ENCODE measurements at regions of chr18 and their contacts with region 1.

Region 1: DNA sequence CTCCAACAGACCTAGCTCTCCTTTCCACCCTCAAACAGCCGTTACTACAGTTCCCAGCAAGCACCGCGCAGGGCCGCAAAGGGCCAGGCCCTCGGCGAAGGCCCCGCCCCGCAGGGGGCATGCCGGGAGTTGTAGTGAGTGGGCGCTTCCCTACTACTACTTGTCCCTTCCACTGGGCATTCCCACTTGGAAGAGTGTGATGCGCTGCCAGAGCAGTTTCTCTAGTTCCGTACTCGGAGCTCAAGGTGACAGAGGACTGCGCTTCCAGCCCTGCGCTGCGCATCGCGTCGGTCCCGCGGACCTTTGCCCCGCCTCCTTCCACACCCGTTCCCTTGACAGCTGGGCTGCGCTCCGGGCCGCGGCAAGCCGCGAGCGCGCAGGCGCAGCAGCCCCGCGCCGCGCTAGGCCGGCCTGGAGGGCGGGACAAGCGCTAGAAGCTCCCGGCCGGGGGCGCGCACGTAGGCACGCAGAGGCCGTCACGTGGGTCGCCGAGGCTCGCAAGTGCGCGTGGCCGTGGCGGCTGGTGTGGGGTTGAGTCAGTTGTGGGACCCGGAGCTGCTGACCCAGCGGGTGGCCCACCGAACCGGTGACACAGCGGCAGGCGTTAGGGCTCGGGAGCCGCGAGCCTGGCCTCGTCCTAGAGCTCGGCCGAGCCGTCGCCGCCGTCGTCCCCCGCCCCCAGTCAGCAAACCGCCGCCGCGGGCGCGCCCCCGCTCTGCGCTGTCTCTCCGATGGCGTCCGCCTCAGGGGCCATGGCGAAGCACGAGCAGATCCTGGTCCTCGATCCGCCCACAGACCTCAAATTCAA is at the start of gene VAPA:
- DNase-seq: peak; percentile 95 to 98 (median 96)
- ATAC-seq: peak; percentile 95 to 98 (median 96)
- H3K4me3 ChIP-seq: peak within 1 kb of the TSS; percentile 71 to 98 (median 94)
- H3K27ac ChIP-seq: peak within 1 kb of the TSS; percentile 99 to 100 (median 99)
- H3K4me1 ChIP-seq: peaks cover 0 to 41% (median 36%) of the 10 kb centered on the region in 12 donors
- H3K27me3 ChIP-seq: no peaks in the 10 kb centered on the region
- CTCF ChIP-seq: no peak
- POLR2A ChIP-seq: peak in 1 of 2 donors; percentile 87
- total RNA-seq, gene VAPA: 186 to 289 (median 219) TPM

Region 2: DNA sequence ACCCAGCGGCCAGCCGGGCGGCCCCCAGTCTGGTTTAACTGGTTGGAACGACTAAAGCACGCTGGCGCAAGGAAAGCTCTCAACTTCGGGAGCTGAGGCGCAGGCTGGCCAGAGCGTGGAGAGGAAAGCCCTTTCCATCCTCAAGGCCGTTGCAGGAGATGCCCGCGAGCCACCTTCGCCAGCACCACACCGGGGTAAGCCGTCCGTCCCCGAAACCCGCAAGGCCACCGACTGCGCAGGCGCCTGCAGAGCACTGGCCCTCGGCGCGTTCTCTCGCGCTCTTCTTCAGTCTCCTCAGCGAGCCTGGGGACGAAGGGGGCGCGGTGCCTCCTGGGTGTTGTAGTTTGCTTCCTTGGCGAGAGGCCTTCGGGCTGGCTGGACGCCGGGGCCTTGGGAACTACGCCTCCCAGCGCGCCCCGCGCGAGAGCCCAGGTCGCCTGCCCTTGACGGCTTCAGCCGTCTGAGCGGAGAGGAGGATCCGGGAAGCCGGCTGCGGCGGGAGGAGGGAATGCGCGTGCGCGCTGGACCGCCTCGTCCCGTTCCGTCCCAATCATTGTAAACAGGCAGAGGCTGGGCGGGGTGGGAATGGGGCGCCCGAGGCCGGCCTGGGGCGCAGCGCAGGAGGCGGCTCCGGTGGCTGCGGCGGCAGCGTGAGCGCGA is 438.6 kb before region 1 on chr18 and contains the start of gene RALBP1:
- intact Hi-C with region 1: loop called in 1 of 10 experiments (anchors 5 kb)
- DNase-seq: peak; percentile 99 to 100 (median 100)
- ATAC-seq: peak; percentile 99
- H3K4me3 ChIP-seq: peak within 1 kb of the TSS; percentile 81 to 99 (median 92)
- H3K27ac ChIP-seq: peak within 1 kb of the TSS; percentile 89 to 98 (median 94)
- H3K4me1 ChIP-seq: peaks cover 0 to 30% (median 16%) of the 10 kb centered on the region in 12 donors
- H3K27me3 ChIP-seq: no peaks in the 10 kb centered on the region
- CTCF ChIP-seq: peak in 4 of 12 donors; percentile 35 to 47 (median 43)
- POLR2A ChIP-seq: peak; percentile 51 to 90
- total RNA-seq, gene RALBP1: 36.9 to 91.1 (median 50.3) TPM

Region 3: DNA sequence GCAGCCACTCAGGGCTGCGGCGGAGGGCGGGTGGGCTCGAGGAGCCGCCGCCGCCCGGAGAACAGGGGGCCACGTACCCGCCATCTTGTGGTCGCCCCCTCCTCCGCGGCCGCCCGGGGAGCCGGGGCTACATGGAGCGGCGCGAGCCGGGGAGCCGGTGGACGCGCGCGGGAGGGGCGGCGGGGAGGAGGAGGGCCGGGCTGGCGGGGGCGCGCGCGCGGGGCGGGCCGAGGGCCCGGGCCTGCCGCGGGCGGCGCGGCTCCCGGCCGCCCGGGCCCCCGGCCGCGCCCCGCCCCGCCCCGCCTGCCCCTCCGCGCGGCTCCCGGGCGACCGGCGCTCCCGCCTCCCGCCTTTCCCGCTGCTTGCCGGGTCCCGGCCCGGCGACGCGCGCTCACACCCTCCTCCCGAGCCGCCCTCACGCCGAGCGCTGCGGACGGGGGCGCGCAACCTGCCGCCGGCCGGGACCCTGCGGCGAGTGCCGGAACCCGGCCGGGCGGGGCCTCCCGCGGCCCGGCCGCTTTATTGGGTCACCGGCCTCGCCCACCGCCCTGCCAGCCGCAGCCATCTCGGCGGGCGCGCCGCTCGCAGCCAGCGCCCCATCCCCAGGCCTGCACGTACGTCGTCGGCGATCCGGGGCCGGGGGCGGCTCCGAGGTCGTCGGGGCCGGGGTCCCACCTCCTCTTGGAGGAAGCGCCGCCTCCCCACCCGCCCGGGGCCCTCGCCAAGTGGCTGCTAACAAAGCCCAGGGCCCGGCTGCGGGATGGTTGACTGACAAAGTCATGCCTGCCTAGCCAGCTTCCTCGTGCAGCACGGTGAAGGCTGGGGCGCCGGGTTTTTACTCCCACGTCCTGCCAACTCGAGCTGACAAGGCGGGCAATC is 299.1 kb before region 1 on chr18 and contains the start of gene PPP4R1:
- intact Hi-C with region 1: loop called in 1 of 10 experiments (anchors 10 kb)
- DNase-seq: peak; percentile 83 to 90 (median 88)
- ATAC-seq: peak; percentile 44 to 86 (median 78)
- H3K4me3 ChIP-seq: peak within 1 kb of the TSS; percentile 74 to 99 (median 85)
- H3K27ac ChIP-seq: peak within 1 kb of the TSS; percentile 92 to 99 (median 97)
- H3K4me1 ChIP-seq: peaks cover 0 to 43% (median 25%) of the 10 kb centered on the region in 12 donors
- H3K27me3 ChIP-seq: no peaks in the 10 kb centered on the region
- CTCF ChIP-seq: no peak
- POLR2A ChIP-seq: peak in 1 of 2 donors; percentile 29
- total RNA-seq, gene PPP4R1: 39.1 to 81.3 (median 63.8) TPM

Region 4: GRCh38 chr18:9708057-9708433 is 205.7 kb before region 1 on chr18 and contains the start of gene RAB31:
- intact Hi-C with region 1: loop called in 2 of 10 experiments (anchors 10 kb)
- DNase-seq: peak; percentile 86 to 90 (median 89)
- ATAC-seq: peak; percentile 66 to 96 (median 93)
- H3K4me3 ChIP-seq: peak within 1 kb of the TSS; percentile 60 to 98 (median 73)
- H3K27ac ChIP-seq: peak within 1 kb of the TSS; percentile 84 to 95 (median 88)
- H3K4me1 ChIP-seq: peaks cover 0 to 60% (median 10%) of the 10 kb centered on the region in 12 donors
- H3K27me3 ChIP-seq: no peaks in the 10 kb centered on the region
- CTCF ChIP-seq: peak in 3 of 12 donors; percentile 10 to 19 (median 12)
- POLR2A ChIP-seq: peak in 1 of 2 donors; percentile 68
- total RNA-seq, gene RAB31: 8.6 to 67.7 (median 15.4) TPM

Region 5: GRCh38 chr18:9827641-9828505 is 85.9 kb before region 1 on chr18:
- intact Hi-C with region 1: loop called in 2 of 10 experiments (anchors 10 kb)
- DNase-seq: peak in 2 of 5 donors; percentile 55 to 57
- ATAC-seq: peak in 3 of 4 donors; percentile 2 to 60 (median 18)
- H3K4me3 ChIP-seq: no peak overlapping the region
- H3K27ac ChIP-seq: peak overlapping the region in 6 of 12 donors; percentile 2 to 90 (median 20)
- H3K4me1 ChIP-seq: peaks cover 0 to 66% (median 24%) of the 10 kb centered on the region in 12 donors
- H3K27me3 ChIP-seq: no peaks in the 10 kb centered on the region
- CTCF ChIP-seq: no peak
- POLR2A ChIP-seq: no peak

Region 6: GRCh38 chr18:9876867-9877654 is 36.7 kb before region 1 on chr18:
- intact Hi-C with region 1: loop called in 2 of 10 experiments (anchors 5 kb)
- DNase-seq: peak in 1 of 5 donors; percentile 33
- ATAC-seq: peak in 3 of 4 donors; percentile 73 to 90 (median 87)
- H3K4me3 ChIP-seq: peak overlapping the region in 8 of 12 donors; percentile 1 to 43 (median 32)
- H3K27ac ChIP-seq: peak overlapping the region in 11 of 12 donors; percentile 2 to 77 (median 45)
- H3K4me1 ChIP-seq: peaks cover 0 to 13% (median 2%) of the 10 kb centered on the region in 12 donors
- H3K27me3 ChIP-seq: no peaks in the 10 kb centered on the region
- CTCF ChIP-seq: no peak
- POLR2A ChIP-seq: no peak

Region 7: DNA sequence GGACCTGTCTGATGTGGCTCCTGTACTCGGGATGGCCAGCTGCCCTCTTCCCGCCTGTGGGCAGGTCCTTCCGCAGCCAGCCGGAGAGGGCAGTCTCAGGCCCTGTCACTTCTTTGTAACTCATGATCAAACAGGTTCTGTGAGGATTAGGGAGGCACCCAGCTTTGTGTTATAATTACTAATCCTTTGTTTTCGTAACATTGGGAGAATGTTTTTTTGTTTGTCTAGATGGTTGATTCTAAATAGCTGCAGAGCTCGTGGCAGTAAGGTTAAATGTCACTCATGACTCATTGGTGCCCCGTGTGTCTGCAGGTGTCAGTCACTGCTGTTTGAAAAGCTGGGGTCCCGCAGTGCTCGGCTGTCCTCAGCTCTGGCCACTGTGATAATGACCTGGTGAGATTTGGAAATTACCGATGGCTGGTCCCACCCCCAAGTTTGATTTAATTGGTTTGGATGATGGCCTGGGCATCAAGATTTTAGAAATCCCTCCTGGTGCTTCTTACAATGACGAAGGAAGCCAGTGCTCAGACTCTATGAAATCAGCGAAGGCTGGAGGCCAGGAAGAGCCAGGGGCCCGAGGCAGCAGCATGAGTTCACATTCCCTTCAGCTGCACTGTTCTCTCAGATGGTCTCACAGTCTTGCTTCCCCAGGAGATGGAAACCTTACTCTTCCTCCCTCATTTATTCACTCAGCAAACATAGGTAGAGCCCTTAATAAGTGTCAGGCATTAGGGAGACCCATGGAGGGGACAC is 172.9 kb after region 1 on chr18:
- intact Hi-C with region 1: no loop called
- DNase-seq: no peak
- ATAC-seq: no peak
- H3K4me3 ChIP-seq: no peak overlapping the region
- H3K27ac ChIP-seq: no peak overlapping the region
- H3K4me1 ChIP-seq: peaks cover 0 to 3% (median 0%) of the 10 kb centered on the region in 12 donors
- H3K27me3 ChIP-seq: no peaks in the 10 kb centered on the region
- CTCF ChIP-seq: no peak
- POLR2A ChIP-seq: no peak